ENCODE measurements at regions of chr18 and their contacts with region 1.

Region 1: GRCh38 chr18:70195852-70196434 is 9.5 kb downstream of the RTTN start:
- DNase-seq: peak in 2 of 9 experiments; percentile 27 to 41
- ATAC-seq: peak; percentile 44
- H3K4me3 ChIP-seq: no peak overlapping the region
- H3K4me3 Mint-ChIP-seq: no peak overlapping the region
- H3K27ac ChIP-seq: no peak overlapping the region
- H3K27ac Mint-ChIP-seq: no peak overlapping the region
- H3K4me1 ChIP-seq: no peaks in the 10 kb centered on the region
- H3K4me1 Mint-ChIP-seq: peaks cover 1% of the 10 kb centered on the region
- H3K27me3 ChIP-seq: no peaks in the 10 kb centered on the region
- H3K27me3 Mint-ChIP-seq: no peaks in the 10 kb centered on the region
- CTCF ChIP-seq: peak; percentile 72

Region 2: GRCh38 chr18:69814861-69815385 is 381.0 kb before region 1 on chr18:
- CTCF ChIA-PET with region 1: no interaction called
- POLR2A ChIA-PET with region 1: no interaction called
- intact Hi-C with region 1: no loop called
- DNase-seq: no peak
- ATAC-seq: no peak
- H3K4me3 ChIP-seq: no peak overlapping the region
- H3K4me3 Mint-ChIP-seq: no peak overlapping the region
- H3K27ac ChIP-seq: no peak overlapping the region
- H3K27ac Mint-ChIP-seq: no peak overlapping the region
- H3K4me1 ChIP-seq: no peaks in the 10 kb centered on the region
- H3K4me1 Mint-ChIP-seq: no peaks in the 10 kb centered on the region
- H3K27me3 ChIP-seq: no peaks in the 10 kb centered on the region
- H3K27me3 Mint-ChIP-seq: no peaks in the 10 kb centered on the region
- CTCF ChIP-seq: no peak

Region 3: GRCh38 chr18:70132999-70133398 is 62.9 kb before region 1 on chr18:
- CTCF ChIA-PET with region 1: no interaction called
- POLR2A ChIA-PET with region 1: no interaction called
- intact Hi-C with region 1: no loop called
- DNase-seq: no peak
- ATAC-seq: no peak
- H3K4me3 ChIP-seq: no peak overlapping the region
- H3K4me3 Mint-ChIP-seq: no peak overlapping the region
- H3K27ac ChIP-seq: no peak overlapping the region
- H3K27ac Mint-ChIP-seq: no peak overlapping the region
- H3K4me1 ChIP-seq: no peaks in the 10 kb centered on the region
- H3K4me1 Mint-ChIP-seq: no peaks in the 10 kb centered on the region
- H3K27me3 ChIP-seq: no peaks in the 10 kb centered on the region
- H3K27me3 Mint-ChIP-seq: no peaks in the 10 kb centered on the region
- CTCF ChIP-seq: no peak

Region 4: GRCh38 chr18:70158992-70159717 is 36.8 kb before region 1 on chr18:
- CTCF ChIA-PET with region 1: no interaction called
- POLR2A ChIA-PET with region 1: no interaction called
- intact Hi-C with region 1: no loop called
- DNase-seq: no peak
- ATAC-seq: no peak
- H3K4me3 ChIP-seq: no peak overlapping the region
- H3K4me3 Mint-ChIP-seq: no peak overlapping the region
- H3K27ac ChIP-seq: no peak overlapping the region
- H3K27ac Mint-ChIP-seq: no peak overlapping the region
- H3K4me1 ChIP-seq: no peaks in the 10 kb centered on the region
- H3K4me1 Mint-ChIP-seq: peaks cover 17% of the 10 kb centered on the region
- H3K27me3 ChIP-seq: no peaks in the 10 kb centered on the region
- H3K27me3 Mint-ChIP-seq: no peaks in the 10 kb centered on the region
- CTCF ChIP-seq: no peak

Region 5: GRCh38 chr18:70183441-70183840 is 12.5 kb before region 1 on chr18:
- CTCF ChIA-PET with region 1: interaction called, 15 read pairs
- POLR2A ChIA-PET with region 1: no interaction called
- intact Hi-C with region 1: no loop called
- DNase-seq: no peak
- ATAC-seq: no peak
- H3K4me3 ChIP-seq: no peak overlapping the region
- H3K4me3 Mint-ChIP-seq: no peak overlapping the region
- H3K27ac ChIP-seq: no peak overlapping the region
- H3K27ac Mint-ChIP-seq: no peak overlapping the region
- H3K4me1 ChIP-seq: no peaks in the 10 kb centered on the region
- H3K4me1 Mint-ChIP-seq: peaks cover 18% of the 10 kb centered on the region
- H3K27me3 ChIP-seq: no peaks in the 10 kb centered on the region
- H3K27me3 Mint-ChIP-seq: no peaks in the 10 kb centered on the region
- CTCF ChIP-seq: no peak

Region 6: GRCh38 chr18:70431203-70431624 is 235.3 kb after region 1 on chr18:
- CTCF ChIA-PET with region 1: interaction called, 21 read pairs
- POLR2A ChIA-PET with region 1: no interaction called
- intact Hi-C with region 1: loop called (anchors 1 to 2 kb)
- DNase-seq: no peak
- ATAC-seq: no peak
- H3K4me3 ChIP-seq: no peak overlapping the region
- H3K4me3 Mint-ChIP-seq: no peak overlapping the region
- H3K27ac ChIP-seq: no peak overlapping the region
- H3K27ac Mint-ChIP-seq: no peak overlapping the region
- H3K4me1 ChIP-seq: no peaks in the 10 kb centered on the region
- H3K4me1 Mint-ChIP-seq: no peaks in the 10 kb centered on the region
- H3K27me3 ChIP-seq: no peaks in the 10 kb centered on the region
- H3K27me3 Mint-ChIP-seq: no peaks in the 10 kb centered on the region
- CTCF ChIP-seq: no peak

Region 7: GRCh38 chr18:70454704-70455322 is 258.9 kb after region 1 on chr18:
- CTCF ChIA-PET with region 1: interaction called, 19 read pairs
- POLR2A ChIA-PET with region 1: no interaction called
- intact Hi-C with region 1: loop called (anchors 1 to 5 kb)
- DNase-seq: peak in 4 of 9 experiments; percentile 17 to 59 (median 34)
- ATAC-seq: peak; percentile 51
- H3K4me3 ChIP-seq: no peak overlapping the region
- H3K4me3 Mint-ChIP-seq: no peak overlapping the region
- H3K27ac ChIP-seq: no peak overlapping the region
- H3K27ac Mint-ChIP-seq: no peak overlapping the region
- H3K4me1 ChIP-seq: no peaks in the 10 kb centered on the region
- H3K4me1 Mint-ChIP-seq: no peaks in the 10 kb centered on the region
- H3K27me3 ChIP-seq: no peaks in the 10 kb centered on the region
- H3K27me3 Mint-ChIP-seq: peaks cover 8% of the 10 kb centered on the region
- CTCF ChIP-seq: peak; percentile 63